ENCODE measurements at regions of chr6 and their contacts with region 1.

Region 1: DNA sequence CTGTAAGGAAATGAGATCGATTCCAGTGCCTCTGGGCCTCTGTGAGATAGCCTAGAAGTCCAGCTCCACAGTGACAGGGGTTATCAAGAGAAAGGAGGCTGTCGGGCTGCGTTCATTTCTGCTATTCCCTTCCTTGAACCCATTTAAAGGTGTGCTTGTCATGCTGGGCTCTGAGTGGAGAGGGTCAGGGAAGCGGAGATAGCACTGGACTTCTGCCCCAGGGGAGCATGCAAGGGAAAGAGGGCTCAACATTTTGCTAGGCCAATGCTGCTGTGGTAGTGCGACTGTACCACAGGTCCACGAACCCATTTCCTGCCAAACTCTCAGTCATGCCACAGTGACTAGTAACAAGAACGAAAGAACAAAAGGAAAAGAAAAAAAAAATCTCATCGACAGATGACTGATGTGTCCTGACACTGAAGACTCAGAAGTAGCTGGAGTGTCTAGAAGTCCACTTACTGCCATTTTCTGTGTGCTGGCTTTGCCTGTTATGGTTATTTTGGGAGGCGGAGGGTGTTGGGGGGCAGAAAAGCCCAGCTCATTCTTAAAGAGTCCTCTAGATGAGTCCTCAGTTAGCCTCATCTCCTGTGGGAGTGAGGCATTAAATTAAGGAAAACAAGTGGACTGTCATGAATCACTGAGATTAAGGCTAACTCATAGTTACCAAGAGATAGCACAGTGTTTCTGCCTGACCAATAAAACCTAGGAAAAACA is 8.1 kb downstream of the NEDD9 start:
- DNase-seq: no peak
- ATAC-seq: peak in 1 of 2 donors; percentile 49
- H3K4me3 ChIP-seq: peak overlapping the region; percentile 26
- H3K27ac ChIP-seq: peak overlapping the region; percentile 84
- H3K4me1 ChIP-seq: peaks cover 10% of the 10 kb centered on the region
- H3K27me3 ChIP-seq: no peaks in the 10 kb centered on the region

Region 2: DNA sequence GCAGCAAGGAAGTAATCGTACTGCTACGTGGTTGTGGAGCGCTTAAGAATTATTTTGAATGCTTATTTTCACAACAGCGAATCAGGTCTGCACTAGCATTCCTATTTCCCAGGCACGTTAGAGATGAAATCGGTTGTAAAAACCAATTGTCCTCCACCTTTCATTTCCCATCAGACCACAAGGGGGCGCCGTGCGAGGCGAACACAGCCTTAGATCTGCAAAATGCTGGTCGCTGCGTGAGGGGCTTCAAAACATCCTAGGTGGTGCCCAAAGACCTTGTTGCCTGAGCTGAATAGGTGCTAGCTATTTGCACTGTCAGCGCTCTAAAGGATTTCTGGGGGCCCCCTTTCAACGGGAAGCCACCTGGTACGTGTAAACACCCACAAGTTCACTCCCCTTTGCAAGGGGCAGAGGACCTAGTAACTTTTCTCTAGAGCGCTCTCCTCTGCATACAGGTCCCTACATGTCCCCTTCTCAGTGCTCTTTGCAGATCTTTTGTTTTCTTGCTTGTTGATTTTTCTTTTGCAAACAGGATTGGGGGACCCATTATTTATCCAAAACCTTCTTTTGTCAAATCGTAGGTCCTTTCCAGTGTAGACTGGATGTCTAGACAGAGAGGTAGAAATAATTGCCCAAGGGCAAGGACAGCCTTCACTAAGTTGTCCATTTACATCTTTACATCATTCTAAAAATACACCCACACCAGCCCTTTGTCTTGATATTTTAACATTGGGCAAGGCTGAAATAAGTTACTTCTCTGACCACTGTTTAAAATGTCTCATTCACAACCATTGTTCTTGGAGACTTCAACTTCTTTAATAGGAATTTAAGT is 51.7 kb before region 1 on chr6:
- intact Hi-C with region 1: loop called in 2 of 4 experiments (anchors 10 kb)
- DNase-seq: peak; percentile 65 to 87 (median 79)
- ATAC-seq: peak; percentile 51
- H3K4me3 ChIP-seq: no peak overlapping the region
- H3K27ac ChIP-seq: no peak overlapping the region
- H3K4me1 ChIP-seq: peaks cover 5% of the 10 kb centered on the region
- H3K27me3 ChIP-seq: no peaks in the 10 kb centered on the region

Measured in right cardiac atrium (tissue), 5 donors.